ENCODE measurements at regions of chr1 and their contacts with region 1.

Region 1: DNA sequence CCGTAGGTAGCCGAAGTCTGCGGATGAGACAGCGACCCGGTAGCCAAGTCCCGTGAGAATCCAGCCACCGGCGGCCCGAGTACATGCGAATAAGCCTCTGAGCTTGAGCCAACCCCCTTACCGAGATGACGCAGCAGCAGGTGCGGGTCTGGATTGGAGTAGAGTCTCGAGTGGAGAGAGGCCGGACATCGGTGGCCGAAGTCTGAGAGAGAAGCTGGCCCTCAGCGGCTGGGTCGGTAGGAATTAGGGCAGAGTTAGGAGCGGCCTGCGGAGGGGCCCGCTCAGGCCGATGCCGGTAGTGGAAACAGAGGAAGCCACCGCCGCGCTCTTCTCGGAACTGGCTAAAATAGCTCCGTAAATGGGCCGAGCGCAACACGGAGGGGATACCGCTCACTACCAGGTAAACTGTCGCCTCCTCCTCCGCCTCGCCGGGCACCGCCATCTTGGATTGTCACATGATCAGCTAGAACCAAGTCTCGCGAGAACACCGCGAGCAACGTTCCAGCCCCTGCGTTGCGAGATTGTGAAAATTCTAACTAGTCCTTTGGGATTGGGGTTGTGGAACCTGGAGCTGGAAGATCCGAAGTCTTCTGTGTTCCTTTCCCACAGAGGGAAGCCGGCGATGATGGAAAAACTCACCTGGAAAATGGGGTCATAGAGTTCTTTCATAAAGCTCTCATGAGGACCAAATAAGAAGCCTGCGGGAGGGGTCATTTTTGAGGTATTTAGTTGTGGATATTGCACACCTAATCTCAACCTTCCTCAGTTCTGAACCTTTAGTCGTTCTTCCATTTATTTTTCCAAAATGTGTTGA is at the start of gene GPATCH3:
- DNase-seq: peak; percentile 92
- H3K4me3 Mint-ChIP-seq: peak within 1 kb of the TSS; percentile 91
- H3K27ac Mint-ChIP-seq: peak within 1 kb of the TSS; percentile 96
- H3K4me1 Mint-ChIP-seq: peaks cover 22% of the 10 kb centered on the region
- H3K27me3 Mint-ChIP-seq: no peaks in the 10 kb centered on the region
- total RNA-seq, gene GPATCH3: 6.3 to 9.2 TPM

Region 2: GRCh38 chr1:26889551-26890466 is 10.4 kb before region 1 on chr1 and contains the start of gene GPN2:
- CTCF ChIA-PET with region 1: interaction called, 15 read pairs
- POLR2A ChIA-PET with region 1: interaction called, 33 read pairs
- intact Hi-C with region 1: no loop called
- DNase-seq: peak; percentile 86
- H3K4me3 Mint-ChIP-seq: peak within 1 kb of the TSS; percentile 90
- H3K27ac Mint-ChIP-seq: peak within 1 kb of the TSS; percentile 85
- H3K4me1 Mint-ChIP-seq: peaks cover 36% of the 10 kb centered on the region
- H3K27me3 Mint-ChIP-seq: no peaks in the 10 kb centered on the region
- total RNA-seq, gene GPN2: 35.4 to 38.3 TPM

Region 3: GRCh38 chr1:26921540-26922430 is 21.6 kb after region 1 on chr1 and contains the start of gene NUDC:
- CTCF ChIA-PET with region 1: interaction called, 3 read pairs
- POLR2A ChIA-PET with region 1: interaction called, 26 read pairs
- intact Hi-C with region 1: loop called (anchors 2 kb)
- DNase-seq: peak; percentile 98
- H3K4me3 Mint-ChIP-seq: peak within 1 kb of the TSS; percentile 98
- H3K27ac Mint-ChIP-seq: peak within 1 kb of the TSS; percentile 93
- H3K4me1 Mint-ChIP-seq: peaks cover 36% of the 10 kb centered on the region
- H3K27me3 Mint-ChIP-seq: no peaks in the 10 kb centered on the region
- total RNA-seq, gene NUDC: 90.8 to 97.1 TPM

Region 4: GRCh38 chr1:27044613-27045151 is 144.5 kb after region 1 on chr1:
- CTCF ChIA-PET with region 1: no interaction called
- POLR2A ChIA-PET with region 1: no interaction called
- intact Hi-C with region 1: no loop called
- DNase-seq: peak; percentile 93
- H3K4me3 Mint-ChIP-seq: peak overlapping the region; percentile 64
- H3K27ac Mint-ChIP-seq: peak overlapping the region; percentile 42
- H3K4me1 Mint-ChIP-seq: peaks cover 19% of the 10 kb centered on the region
- H3K27me3 Mint-ChIP-seq: no peaks in the 10 kb centered on the region

Measured in activated CD4-positive, alpha-beta memory T cell treated with anti-CD3 and anti-CD28 coated beads for 36 hours (primary cell).